ENCODE measurements at regions of chr19 and their contacts with region 1.

Region 1: GRCh38 chr19:57527136-57527881 is at the start of gene ZNF549:
- DNase-seq: peak; percentile 93
- ATAC-seq: peak; percentile 99
- H3K4me3 ChIP-seq: peak within 1 kb of the TSS; percentile 68 to 93 (median 92)
- H3K4me3 Mint-ChIP-seq: peak within 1 kb of the TSS; percentile 91
- H3K27ac ChIP-seq: peak within 1 kb of the TSS; percentile 84 to 89
- H3K27ac Mint-ChIP-seq: peak within 1 kb of the TSS; percentile 91
- H3K4me1 ChIP-seq: peaks cover 10 to 17% of the 10 kb centered on the region in 2 donors
- H3K4me1 Mint-ChIP-seq: peaks cover 22% of the 10 kb centered on the region
- H3K27me3 ChIP-seq: no peaks in the 10 kb centered on the region
- H3K27me3 Mint-ChIP-seq: no peaks in the 10 kb centered on the region
- CTCF ChIP-seq: no peak
- total RNA-seq, gene ZNF549: 23.0 and 23.7 TPM in 2 replicates

Region 2: DNA sequence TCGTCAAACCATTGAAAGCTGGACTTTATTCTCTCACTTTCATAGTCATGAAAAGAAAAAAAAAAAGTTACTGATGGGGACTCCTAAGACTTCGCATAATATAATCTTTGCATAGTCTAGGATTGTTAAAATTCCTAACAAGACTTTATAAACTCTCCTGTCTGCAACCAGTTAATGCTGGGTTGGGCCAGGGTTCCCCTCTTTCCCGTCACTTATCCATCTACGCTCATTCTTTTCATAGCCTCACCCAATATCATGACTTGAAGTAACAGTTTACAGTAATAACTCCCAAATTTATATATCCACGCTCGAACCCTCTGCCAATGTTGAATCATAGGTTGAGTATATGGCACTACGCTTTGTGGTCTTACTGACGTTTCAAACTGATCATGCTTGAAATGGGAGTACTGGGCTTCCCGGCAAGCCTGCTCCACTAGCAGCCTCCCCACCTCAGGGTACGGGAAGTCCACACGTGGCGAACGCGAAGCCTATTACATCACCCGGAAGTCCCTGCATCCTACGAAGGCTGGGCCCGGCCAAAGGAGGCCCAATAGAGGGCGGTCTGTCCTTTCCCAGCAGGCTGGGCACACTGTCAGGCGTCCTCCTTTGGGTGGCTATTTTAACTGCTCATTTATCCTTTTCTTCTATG is 247.8 kb before region 1 on chr19:
- CTCF ChIA-PET with region 1: no interaction called
- POLR2A ChIA-PET with region 1: no interaction called
- intact Hi-C with region 1: loop called (anchors 1 kb)
- DNase-seq: peak; percentile 92
- ATAC-seq: peak; percentile 73
- H3K4me3 ChIP-seq: peak overlapping the region; percentile 73 to 94 (median 91)
- H3K4me3 Mint-ChIP-seq: no peak overlapping the region
- H3K27ac ChIP-seq: peak overlapping the region; percentile 98 to 100
- H3K27ac Mint-ChIP-seq: no peak overlapping the region
- H3K4me1 ChIP-seq: peaks cover 29 to 33% of the 10 kb centered on the region in 2 donors
- H3K4me1 Mint-ChIP-seq: peaks cover 31% of the 10 kb centered on the region
- H3K27me3 ChIP-seq: no peaks in the 10 kb centered on the region
- H3K27me3 Mint-ChIP-seq: no peaks in the 10 kb centered on the region
- CTCF ChIP-seq: peak; percentile 26

Region 3: DNA sequence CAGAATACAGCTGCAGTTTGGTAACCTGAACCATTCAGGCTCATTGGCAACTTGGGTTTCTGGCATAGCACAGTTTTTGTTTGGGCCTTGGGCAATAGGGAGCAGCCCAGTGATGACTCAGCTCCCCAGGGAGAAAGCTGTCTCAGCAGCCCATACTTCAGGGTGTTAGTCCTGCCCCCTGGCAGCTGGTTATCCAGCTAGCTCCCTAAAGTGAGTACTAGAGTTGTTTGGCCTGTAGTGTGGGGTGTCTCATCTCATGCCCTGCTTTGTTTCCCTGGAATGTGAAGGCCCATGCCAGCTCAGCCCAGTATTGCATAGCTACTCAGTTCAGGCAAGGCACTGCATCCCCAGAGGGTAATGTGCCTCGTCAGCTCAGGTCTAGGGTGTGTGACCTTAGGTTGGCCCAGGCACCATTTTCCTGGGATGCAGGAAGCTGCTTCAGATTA is 225.3 kb before region 1 on chr19:
- CTCF ChIA-PET with region 1: no interaction called
- POLR2A ChIA-PET with region 1: no interaction called
- intact Hi-C with region 1: no loop called
- DNase-seq: no peak
- ATAC-seq: no peak
- H3K4me3 ChIP-seq: no peak overlapping the region
- H3K4me3 Mint-ChIP-seq: no peak overlapping the region
- H3K27ac ChIP-seq: no peak overlapping the region
- H3K27ac Mint-ChIP-seq: peak overlapping the region; percentile 6
- H3K4me1 ChIP-seq: no peaks in the 10 kb centered on the region
- H3K4me1 Mint-ChIP-seq: peaks cover 15% of the 10 kb centered on the region
- H3K27me3 ChIP-seq: no peaks in the 10 kb centered on the region
- H3K27me3 Mint-ChIP-seq: no peaks in the 10 kb centered on the region
- CTCF ChIP-seq: no peak

Region 4: GRCh38 chr19:57327993-57328392 is 199.3 kb before region 1 on chr19:
- CTCF ChIA-PET with region 1: no interaction called
- POLR2A ChIA-PET with region 1: no interaction called
- intact Hi-C with region 1: no loop called
- DNase-seq: no peak
- ATAC-seq: no peak
- H3K4me3 ChIP-seq: no peak overlapping the region
- H3K4me3 Mint-ChIP-seq: no peak overlapping the region
- H3K27ac ChIP-seq: no peak overlapping the region
- H3K27ac Mint-ChIP-seq: no peak overlapping the region
- H3K4me1 ChIP-seq: peaks cover 0 to 5% of the 10 kb centered on the region in 2 donors
- H3K4me1 Mint-ChIP-seq: peaks cover 6% of the 10 kb centered on the region
- H3K27me3 ChIP-seq: no peaks in the 10 kb centered on the region
- H3K27me3 Mint-ChIP-seq: no peaks in the 10 kb centered on the region
- CTCF ChIP-seq: no peak

Region 5: GRCh38 chr19:57452307-57452706 is 75.0 kb before region 1 on chr19:
- CTCF ChIA-PET with region 1: no interaction called
- POLR2A ChIA-PET with region 1: no interaction called
- intact Hi-C with region 1: no loop called
- DNase-seq: no peak
- ATAC-seq: no peak
- H3K4me3 ChIP-seq: no peak overlapping the region
- H3K4me3 Mint-ChIP-seq: no peak overlapping the region
- H3K27ac ChIP-seq: no peak overlapping the region
- H3K27ac Mint-ChIP-seq: no peak overlapping the region
- H3K4me1 ChIP-seq: no peaks in the 10 kb centered on the region
- H3K4me1 Mint-ChIP-seq: no peaks in the 10 kb centered on the region
- H3K27me3 ChIP-seq: no peaks in the 10 kb centered on the region
- H3K27me3 Mint-ChIP-seq: no peaks in the 10 kb centered on the region
- CTCF ChIP-seq: no peak

Region 6: DNA sequence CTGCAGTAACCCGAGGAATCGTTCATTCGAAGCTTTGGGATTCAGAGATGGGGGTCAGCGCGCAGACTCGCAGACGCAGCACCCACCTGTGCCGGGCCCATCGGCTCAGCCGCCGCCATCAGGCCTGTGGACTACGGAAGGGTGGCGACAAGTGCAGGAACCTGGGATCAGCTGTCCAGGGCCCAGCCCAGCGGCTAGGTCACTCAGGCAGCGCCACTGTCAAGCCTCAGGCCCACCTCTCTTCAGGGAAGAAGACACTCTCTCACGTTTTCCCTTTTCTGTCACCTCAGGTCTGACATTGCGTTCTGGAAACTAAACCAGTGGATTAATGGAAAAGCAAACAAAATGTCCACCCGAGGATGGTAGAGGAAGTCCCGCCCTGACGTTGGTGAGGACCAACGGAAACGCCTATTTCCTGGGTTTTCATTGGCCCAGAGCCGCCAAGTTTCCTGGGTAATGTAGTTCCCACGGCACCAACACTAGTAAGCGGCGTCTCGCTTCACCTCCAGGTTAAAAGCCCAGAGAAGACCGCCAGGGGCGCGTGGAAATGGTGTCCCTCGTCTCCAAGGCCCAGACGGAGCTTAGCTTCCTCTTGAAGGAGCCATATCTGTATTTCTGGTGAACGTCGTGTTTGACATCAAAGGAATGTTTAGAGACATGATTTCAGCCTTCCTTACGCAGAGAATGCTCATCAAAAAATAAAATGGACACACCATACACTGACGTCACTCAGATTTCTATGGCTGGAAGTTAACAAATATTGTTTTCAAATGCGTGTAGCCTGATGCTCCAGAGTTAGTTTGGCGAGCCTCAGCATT is 49.9 kb before region 1 on chr19 and contains the start of gene ZNF772:
- CTCF ChIA-PET with region 1: no interaction called
- POLR2A ChIA-PET with region 1: no interaction called
- intact Hi-C with region 1: loop called (anchors 2 kb)
- DNase-seq: peak; percentile 95
- ATAC-seq: peak; percentile 99
- H3K4me3 ChIP-seq: peak within 1 kb of the TSS; percentile 77 to 91 (median 85)
- H3K4me3 Mint-ChIP-seq: peak within 1 kb of the TSS; percentile 86
- H3K27ac ChIP-seq: peak within 1 kb of the TSS; percentile 65 to 81
- H3K27ac Mint-ChIP-seq: peak within 1 kb of the TSS; percentile 81
- H3K4me1 ChIP-seq: peaks cover 11 to 15% of the 10 kb centered on the region in 2 donors
- H3K4me1 Mint-ChIP-seq: peaks cover 27% of the 10 kb centered on the region
- H3K27me3 ChIP-seq: no peaks in the 10 kb centered on the region
- H3K27me3 Mint-ChIP-seq: peaks cover 10% of the 10 kb centered on the region
- CTCF ChIP-seq: peak; percentile 68
- total RNA-seq, gene ZNF772: 26.2 and 27.4 TPM in 2 replicates

Region 7: DNA sequence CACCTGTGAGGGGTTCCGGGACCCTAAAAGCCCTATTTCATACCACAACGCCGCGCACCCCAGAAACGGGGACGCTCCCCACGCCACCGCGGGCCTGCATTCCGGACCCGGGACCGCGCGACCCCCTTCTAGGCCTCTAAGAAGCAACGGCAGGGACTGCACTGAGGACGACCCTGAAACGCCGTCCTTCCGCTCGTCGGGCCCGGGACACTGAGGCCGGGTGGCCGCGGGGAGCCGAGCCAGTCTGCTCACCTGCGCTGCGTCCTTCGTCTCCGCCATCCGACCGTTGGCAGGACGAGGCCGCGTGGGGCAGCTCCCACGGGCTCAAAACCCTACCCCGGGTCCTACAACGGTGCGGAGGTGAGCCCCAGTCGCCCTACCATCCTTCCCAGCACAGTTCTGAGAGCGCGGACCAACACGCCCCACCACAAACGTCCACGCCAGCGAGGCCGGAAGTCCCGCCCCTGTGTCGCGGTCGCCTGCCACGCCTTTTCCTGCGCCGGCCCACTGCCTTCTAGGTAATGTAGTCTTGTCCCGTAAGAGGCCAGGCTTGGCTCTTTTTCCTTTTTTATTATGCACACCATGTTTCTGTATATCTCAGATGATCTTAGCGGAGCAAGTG is 32.2 kb after region 1 on chr19 and contains the start of gene ZNF550:
- CTCF ChIA-PET with region 1: no interaction called
- POLR2A ChIA-PET with region 1: no interaction called
- intact Hi-C with region 1: loop called (anchors 1 kb)
- DNase-seq: peak; percentile 87
- ATAC-seq: peak; percentile 99
- H3K4me3 ChIP-seq: peak within 1 kb of the TSS; percentile 64 to 98 (median 92)
- H3K4me3 Mint-ChIP-seq: peak within 1 kb of the TSS; percentile 94
- H3K27ac ChIP-seq: peak within 1 kb of the TSS; percentile 28 to 69
- H3K27ac Mint-ChIP-seq: peak within 1 kb of the TSS; percentile 86
- H3K4me1 ChIP-seq: peaks cover 19 to 21% of the 10 kb centered on the region in 2 donors
- H3K4me1 Mint-ChIP-seq: peaks cover 30% of the 10 kb centered on the region
- H3K27me3 ChIP-seq: peaks cover 0 to 4% (median 2%) of the 10 kb centered on the region in 4 experiments
- H3K27me3 Mint-ChIP-seq: peaks cover 13% of the 10 kb centered on the region
- CTCF ChIP-seq: no peak
- total RNA-seq, gene ZNF550: 31.1 and 38.1 TPM in 2 replicates

Region 8: DNA sequence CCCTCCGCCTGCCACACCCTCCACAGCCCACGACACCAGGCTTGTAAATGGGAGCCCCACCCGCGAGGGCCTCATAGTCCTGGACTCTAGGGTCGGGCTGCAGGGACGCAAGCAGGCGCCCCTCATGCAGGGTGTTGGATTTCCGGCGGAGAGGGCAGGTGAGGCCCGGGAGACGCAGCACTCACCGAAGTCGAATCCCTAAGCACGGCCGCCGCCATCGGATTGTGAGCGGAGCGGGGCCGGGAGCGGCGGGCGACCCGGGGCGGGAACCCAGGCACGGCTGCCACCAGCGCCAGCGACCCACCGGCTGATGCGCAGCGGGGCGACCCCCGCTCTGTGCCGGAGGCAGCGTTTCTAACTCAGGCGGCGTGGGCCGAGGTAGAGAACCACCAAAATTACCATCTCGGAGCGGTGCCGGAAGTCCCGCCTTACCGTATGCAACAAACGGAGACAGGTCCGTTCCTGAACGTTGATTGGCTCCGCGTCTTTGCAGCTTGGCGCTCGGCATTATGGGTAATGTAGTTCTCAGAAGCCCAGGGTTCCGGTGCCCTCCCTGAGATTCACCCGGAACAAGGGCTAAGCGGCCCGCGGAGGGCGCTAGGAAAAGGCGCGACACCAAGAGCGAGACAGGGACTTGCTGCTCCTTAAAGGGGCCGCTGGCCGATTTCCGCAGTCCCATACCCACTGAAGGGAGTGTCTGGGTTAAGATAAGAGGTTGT is 51.3 kb after region 1 on chr19 and contains the start of gene ZNF416:
- CTCF ChIA-PET with region 1: no interaction called
- POLR2A ChIA-PET with region 1: no interaction called
- intact Hi-C with region 1: loop called (anchors 1 kb)
- DNase-seq: peak; percentile 99
- ATAC-seq: peak; percentile 89
- H3K4me3 ChIP-seq: peak within 1 kb of the TSS; percentile 28 to 90 (median 72)
- H3K4me3 Mint-ChIP-seq: peak within 1 kb of the TSS; percentile 86
- H3K27ac ChIP-seq: peak within 1 kb of the TSS; percentile 46 to 79
- H3K27ac Mint-ChIP-seq: peak within 1 kb of the TSS; percentile 94
- H3K4me1 ChIP-seq: peaks cover 19 to 27% of the 10 kb centered on the region in 2 donors
- H3K4me1 Mint-ChIP-seq: peaks cover 25% of the 10 kb centered on the region
- H3K27me3 ChIP-seq: no peaks in the 10 kb centered on the region
- H3K27me3 Mint-ChIP-seq: no peaks in the 10 kb centered on the region
- CTCF ChIP-seq: no peak
- total RNA-seq, gene ZNF416: 13.0 and 13.9 TPM in 2 replicates

Region 9: DNA sequence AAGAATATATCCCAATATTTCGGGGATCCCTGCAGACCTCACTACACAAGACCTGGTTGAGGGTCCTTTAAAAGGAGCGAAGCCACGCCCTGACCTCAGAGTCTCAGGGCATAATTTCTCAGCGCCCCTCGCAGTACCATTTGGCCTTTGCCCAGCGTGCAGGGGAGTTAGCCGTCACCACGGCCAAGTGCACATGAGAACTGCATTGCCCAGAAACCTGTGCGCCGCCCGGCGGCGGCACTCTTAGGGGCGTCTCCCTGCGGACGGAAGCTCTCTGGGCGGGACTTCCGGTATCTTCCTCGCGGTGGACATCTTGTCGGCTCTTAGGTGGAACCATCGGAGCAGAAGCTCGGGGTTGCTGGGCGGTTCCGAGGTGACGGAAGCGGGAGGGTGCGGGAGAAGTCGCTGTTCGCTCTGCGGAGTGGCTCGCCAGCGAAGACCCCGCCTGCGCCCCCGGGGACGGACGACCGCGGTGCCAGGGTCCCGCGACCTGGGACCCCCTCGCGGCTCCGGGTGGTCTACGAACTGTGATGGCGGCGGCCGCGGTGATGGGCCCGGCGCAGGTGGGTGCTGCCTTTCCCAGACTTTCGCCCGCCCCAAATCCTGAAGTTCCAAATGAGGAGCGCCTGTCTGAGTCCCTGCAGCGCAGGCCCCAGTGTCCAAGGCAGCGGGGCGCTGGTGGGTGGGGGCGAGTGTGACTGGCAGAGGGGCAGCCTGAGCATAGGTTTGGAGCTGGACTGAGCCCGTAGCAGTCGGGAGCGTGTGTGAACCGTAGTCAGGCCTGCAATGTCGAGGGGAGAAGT is 86.8 kb after region 1 on chr19 and contains the start of gene ZNF134:
- CTCF ChIA-PET with region 1: no interaction called
- POLR2A ChIA-PET with region 1: no interaction called
- intact Hi-C with region 1: loop called (anchors 1 kb)
- DNase-seq: peak; percentile 94
- ATAC-seq: peak; percentile 99
- H3K4me3 ChIP-seq: peak within 1 kb of the TSS; percentile 45 to 97 (median 92)
- H3K4me3 Mint-ChIP-seq: peak within 1 kb of the TSS; percentile 93
- H3K27ac ChIP-seq: peak within 1 kb of the TSS; percentile 42 to 81
- H3K27ac Mint-ChIP-seq: peak within 1 kb of the TSS; percentile 90
- H3K4me1 ChIP-seq: peaks cover 14 to 21% of the 10 kb centered on the region in 2 donors
- H3K4me1 Mint-ChIP-seq: peaks cover 40% of the 10 kb centered on the region
- H3K27me3 ChIP-seq: no peaks in the 10 kb centered on the region
- H3K27me3 Mint-ChIP-seq: no peaks in the 10 kb centered on the region
- CTCF ChIP-seq: peak; percentile 34
- total RNA-seq, gene ZNF134: 38.1 and 38.9 TPM in 2 replicates

Region 10: GRCh38 chr19:58021541-58022282 is 494.4 kb after region 1 on chr19:
- CTCF ChIA-PET with region 1: no interaction called
- POLR2A ChIA-PET with region 1: no interaction called
- intact Hi-C with region 1: no loop called
- DNase-seq: peak; percentile 83
- ATAC-seq: peak; percentile 99
- H3K4me3 ChIP-seq: no peak overlapping the region
- H3K4me3 Mint-ChIP-seq: no peak overlapping the region
- H3K27ac ChIP-seq: no peak overlapping the region
- H3K27ac Mint-ChIP-seq: no peak overlapping the region
- H3K4me1 ChIP-seq: no peaks in the 10 kb centered on the region
- H3K4me1 Mint-ChIP-seq: peaks cover 3% of the 10 kb centered on the region
- H3K27me3 ChIP-seq: peaks cover 0 to 7% (median 0%) of the 10 kb centered on the region in 4 experiments
- H3K27me3 Mint-ChIP-seq: no peaks in the 10 kb centered on the region
- CTCF ChIP-seq: peak; percentile 59

Region 11: DNA sequence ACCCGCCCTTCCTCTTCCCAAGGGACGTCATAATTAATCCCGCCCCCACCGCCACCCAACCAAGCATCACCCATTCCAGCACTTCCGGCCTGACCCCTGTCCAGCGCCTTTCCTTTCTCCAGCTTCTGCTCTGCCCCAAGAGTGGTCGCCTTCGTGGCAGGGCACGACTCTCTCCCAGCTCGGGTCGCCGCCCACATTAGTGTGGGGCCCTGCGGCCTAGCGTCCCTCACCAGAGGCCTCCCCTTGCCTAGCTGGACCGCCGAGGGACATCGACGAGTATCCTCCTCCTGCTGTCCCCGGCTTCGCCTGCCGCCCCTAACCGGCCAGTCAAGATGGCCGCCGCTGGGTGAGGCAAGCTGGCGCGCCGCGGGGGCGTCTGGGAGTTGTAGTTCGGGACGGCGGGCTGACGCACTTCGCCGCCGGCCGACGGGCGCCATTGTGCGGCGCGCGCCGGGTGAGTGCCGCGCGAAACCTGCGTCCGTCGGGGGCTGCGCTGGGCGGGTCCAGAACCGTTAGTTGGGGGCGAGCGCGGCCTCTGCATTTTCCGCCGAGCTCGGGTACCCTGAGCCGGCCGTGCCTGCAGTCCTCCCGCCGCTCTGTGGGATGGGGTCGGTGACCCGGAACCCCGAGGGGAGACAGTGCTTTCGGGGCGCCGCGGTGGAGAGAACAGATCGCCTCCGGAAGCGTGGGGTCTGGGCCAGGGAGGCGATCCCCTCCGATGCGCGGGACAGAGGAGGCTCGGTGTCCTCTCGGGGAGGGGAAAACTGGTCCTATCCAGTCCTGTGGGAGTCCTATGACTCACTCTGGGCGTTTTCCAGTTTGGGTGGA is 655.9 kb after region 1 on chr19 and contains the start of gene ZNF274:
- CTCF ChIA-PET with region 1: no interaction called
- POLR2A ChIA-PET with region 1: no interaction called
- intact Hi-C with region 1: loop called (anchors 1 kb)
- DNase-seq: peak; percentile 97
- ATAC-seq: peak; percentile 85
- H3K4me3 ChIP-seq: peak within 1 kb of the TSS; percentile 78 to 100 (median 88)
- H3K4me3 Mint-ChIP-seq: peak within 1 kb of the TSS; percentile 96
- H3K27ac ChIP-seq: peak within 1 kb of the TSS; percentile 99 to 100
- H3K27ac Mint-ChIP-seq: peak within 1 kb of the TSS; percentile 100
- H3K4me1 ChIP-seq: peaks cover 12 to 20% of the 10 kb centered on the region in 2 donors
- H3K4me1 Mint-ChIP-seq: peaks cover 26% of the 10 kb centered on the region
- H3K27me3 ChIP-seq: no peaks in the 10 kb centered on the region
- H3K27me3 Mint-ChIP-seq: no peaks in the 10 kb centered on the region
- CTCF ChIP-seq: no peak
- total RNA-seq, gene ZNF274: 83.7 and 85.4 TPM in 2 replicates